Gastrocnemius medialis (tissue), 4 donors: ENCODE measurements at regions of chr7 and their contacts with region 1.

Region 1: GRCh38 chr7:15555381-15555859 is 6.4 kb downstream of the AGMO start:
- DNase-seq: no peak
- ATAC-seq: no peak
- H3K4me3 ChIP-seq: no peak overlapping the region
- H3K27ac ChIP-seq: peak overlapping the region in 2 of 4 donors; percentile 21 to 64
- H3K4me1 ChIP-seq: peaks cover 0 to 4% of the 10 kb centered on the region in 2 donors
- H3K27me3 ChIP-seq: no peaks in the 10 kb centered on the region
- CTCF ChIP-seq: peak in 1 of 5 experiments; percentile 18
- POLR2A ChIP-seq: no peak

Region 2: DNA sequence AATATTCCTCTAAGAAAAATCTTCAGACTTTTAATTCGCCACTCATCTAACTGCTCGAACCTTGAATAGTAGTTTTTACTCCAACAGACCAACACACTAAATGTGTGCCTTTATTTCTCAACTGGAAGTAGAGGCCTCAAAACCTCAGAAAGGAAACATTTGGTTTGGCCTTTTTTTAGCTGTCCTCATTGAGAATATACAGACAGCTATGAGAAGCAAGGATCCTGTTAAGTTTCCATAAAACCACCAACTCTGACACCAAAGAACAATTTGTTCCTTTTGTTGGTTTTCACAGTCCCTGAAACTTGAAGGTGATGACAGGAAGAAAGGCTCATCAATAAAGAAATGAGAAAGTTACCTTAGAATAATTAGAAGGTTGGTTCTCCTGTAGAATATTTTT is 330.3 kb after region 1 on chr7:
- in situ Hi-C with region 1: no loop called
- intact Hi-C with region 1: no loop called
- DNase-seq: no peak
- ATAC-seq: no peak
- H3K4me3 ChIP-seq: no peak overlapping the region
- H3K27ac ChIP-seq: no peak overlapping the region
- H3K4me1 ChIP-seq: no peaks in the 10 kb centered on the region
- H3K27me3 ChIP-seq: no peaks in the 10 kb centered on the region
- CTCF ChIP-seq: no peak
- POLR2A ChIP-seq: no peak

Region 3: DNA sequence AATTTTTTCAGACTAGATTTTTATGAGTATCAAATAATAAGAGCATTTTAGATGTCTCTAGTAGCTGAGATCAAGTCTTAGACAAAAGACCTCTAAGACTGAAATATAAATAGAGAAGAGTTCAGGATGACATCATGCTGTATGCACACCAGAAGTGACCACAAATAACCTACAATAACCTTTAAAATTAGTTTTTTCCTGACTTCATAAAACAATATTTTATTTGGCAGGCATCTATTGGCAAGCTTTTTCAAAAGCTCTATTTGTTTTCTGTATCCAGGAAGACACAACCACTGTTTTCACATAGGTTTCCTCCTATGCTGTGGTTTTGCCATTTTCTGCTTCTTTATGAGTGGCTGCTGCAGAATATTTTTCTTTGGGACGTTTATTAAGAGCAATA is 506.8 kb after region 1 on chr7:
- in situ Hi-C with region 1: loop called in 2 of 4 experiments (anchors 10 to 25 kb)
- intact Hi-C with region 1: loop called (anchors 10 kb)
- DNase-seq: no peak
- ATAC-seq: peak; percentile 29 to 63
- H3K4me3 ChIP-seq: no peak overlapping the region
- H3K27ac ChIP-seq: peak overlapping the region; percentile 71 to 82 (median 73)
- H3K4me1 ChIP-seq: peaks cover 0 to 16% of the 10 kb centered on the region in 2 donors
- H3K27me3 ChIP-seq: no peaks in the 10 kb centered on the region
- CTCF ChIP-seq: no peak
- POLR2A ChIP-seq: no peak